Naive thymus-derived CD4-positive, alpha-beta T cell (primary cell): ENCODE measurements at regions of chr22 and their contacts with region 1.

Region 1: GRCh38 chr22:37633625-37634416 is 5.6 kb upstream of the SH3BP1 start:
- DNase-seq: peak in 5 of 9 donors; percentile 25 to 68 (median 37)
- ATAC-seq: peak; percentile 81
- H3K4me3 ChIP-seq: peak overlapping the region; percentile 53
- H3K4me3 Mint-ChIP-seq: peak overlapping the region; percentile 18 to 80 (median 70)
- H3K27ac ChIP-seq: peak overlapping the region; percentile 71
- H3K27ac Mint-ChIP-seq: peak overlapping the region; percentile 86 to 98 (median 93)
- H3K4me1 ChIP-seq: peaks cover 55 to 72% of the 10 kb centered on the region in 2 donors
- H3K4me1 Mint-ChIP-seq: peaks cover 23 to 70% (median 64%) of the 10 kb centered on the region in 7 donors
- H3K27me3 ChIP-seq: no peaks in the 10 kb centered on the region
- H3K27me3 Mint-ChIP-seq: no peaks in the 10 kb centered on the region

Region 2: DNA sequence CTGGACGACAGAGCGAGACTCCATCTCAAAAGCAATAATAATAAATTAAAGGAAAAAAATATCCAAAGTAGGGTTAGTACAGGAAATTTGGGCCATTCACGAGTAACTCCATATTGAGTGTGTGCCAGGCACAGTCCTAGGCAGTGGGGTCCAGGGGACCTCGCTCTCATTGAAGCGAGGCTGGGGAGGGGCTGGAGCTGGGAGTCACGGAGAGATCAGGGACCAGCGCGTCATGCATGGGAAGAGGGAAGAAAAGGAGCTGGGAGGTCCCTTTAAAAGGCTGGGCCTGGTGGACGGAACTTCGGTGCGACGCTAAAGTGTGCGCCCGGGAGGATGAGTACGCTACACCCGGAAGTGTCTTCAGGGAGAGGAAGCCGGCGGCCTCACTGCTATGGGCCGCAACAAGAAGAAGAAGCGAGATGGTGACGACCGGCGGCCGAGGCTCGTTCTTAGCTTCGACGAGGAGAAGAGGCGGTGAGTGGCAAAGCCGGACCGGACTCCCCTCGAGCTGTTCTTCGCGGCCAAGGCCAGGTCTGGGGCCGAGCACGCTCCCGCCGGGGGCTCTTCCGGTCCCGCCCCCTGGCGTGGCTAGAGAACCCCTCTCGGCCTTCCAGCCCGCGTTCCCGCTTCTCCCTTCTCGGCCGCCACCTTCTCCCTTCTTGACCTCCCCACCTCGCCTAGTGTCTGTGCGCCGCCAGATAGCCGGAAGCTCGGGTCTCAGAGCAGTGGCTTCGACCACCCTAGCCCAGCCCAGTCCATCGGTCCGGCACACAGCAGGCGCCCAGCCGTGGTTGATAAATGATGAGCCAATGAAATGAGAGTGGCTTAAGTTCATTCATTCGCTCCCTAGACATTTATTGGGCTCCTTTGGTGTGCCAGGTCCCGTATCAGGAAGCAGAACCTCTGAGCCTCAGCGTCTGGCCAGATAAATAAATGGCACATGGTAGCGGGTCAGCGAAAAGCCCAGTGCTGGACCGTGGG is 52.5 kb after region 1 on chr22 and contains the start of gene NOL12:
- CTCF ChIA-PET with region 1: interaction called, 254 read pairs
- POLR2A ChIA-PET with region 1: interaction called, 13 read pairs
- intact Hi-C with region 1: no loop called
- DNase-seq: peak; percentile 63 to 82 (median 78)
- ATAC-seq: peak; percentile 91
- H3K4me3 ChIP-seq: peak within 1 kb of the TSS; percentile 82
- H3K4me3 Mint-ChIP-seq: peak within 1 kb of the TSS; percentile 93 to 98 (median 96)
- H3K27ac ChIP-seq: peak within 1 kb of the TSS; percentile 84
- H3K27ac Mint-ChIP-seq: peak within 1 kb of the TSS; percentile 88 to 99 (median 95)
- H3K4me1 ChIP-seq: peaks cover 18 to 22% of the 10 kb centered on the region in 2 donors
- H3K4me1 Mint-ChIP-seq: peaks cover 16 to 39% (median 33%) of the 10 kb centered on the region in 7 donors
- H3K27me3 ChIP-seq: no peaks in the 10 kb centered on the region
- H3K27me3 Mint-ChIP-seq: no peaks in the 10 kb centered on the region
- total RNA-seq, gene NOL12: 32.8 to 52.5 (median 45.3) TPM

Region 3: DNA sequence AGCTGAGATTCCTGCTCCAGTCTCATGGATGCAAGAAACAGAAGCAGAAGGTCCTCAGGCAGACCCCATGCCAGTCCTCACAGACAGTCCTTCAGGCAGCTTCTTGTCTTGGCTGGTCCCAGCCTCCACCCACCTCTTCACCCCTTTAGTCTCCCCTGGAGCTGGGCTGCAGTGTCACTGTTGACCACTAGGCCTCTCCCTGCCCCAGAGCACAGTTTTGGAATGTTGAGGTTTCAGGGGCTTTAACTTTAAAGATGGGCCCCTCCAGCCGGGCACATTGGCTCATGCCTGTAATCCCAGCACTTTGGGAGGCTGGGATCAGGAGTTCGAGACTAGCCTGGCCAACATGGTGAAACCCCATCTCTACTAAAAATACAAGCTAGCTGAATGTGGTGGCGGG is 134.5 kb after region 1 on chr22:
- CTCF ChIA-PET with region 1: no interaction called
- POLR2A ChIA-PET with region 1: no interaction called
- intact Hi-C with region 1: no loop called
- DNase-seq: no peak
- ATAC-seq: no peak
- H3K4me3 ChIP-seq: no peak overlapping the region
- H3K4me3 Mint-ChIP-seq: no peak overlapping the region
- H3K27ac ChIP-seq: no peak overlapping the region
- H3K27ac Mint-ChIP-seq: no peak overlapping the region
- H3K4me1 ChIP-seq: no peaks in the 10 kb centered on the region
- H3K4me1 Mint-ChIP-seq: peaks cover 0 to 4% (median 0%) of the 10 kb centered on the region in 7 donors
- H3K27me3 ChIP-seq: no peaks in the 10 kb centered on the region
- H3K27me3 Mint-ChIP-seq: no peaks in the 10 kb centered on the region